Spleen (tissue), 13 donors: ENCODE measurements at regions of chr1 and their contacts with region 1.

Region 1: DNA sequence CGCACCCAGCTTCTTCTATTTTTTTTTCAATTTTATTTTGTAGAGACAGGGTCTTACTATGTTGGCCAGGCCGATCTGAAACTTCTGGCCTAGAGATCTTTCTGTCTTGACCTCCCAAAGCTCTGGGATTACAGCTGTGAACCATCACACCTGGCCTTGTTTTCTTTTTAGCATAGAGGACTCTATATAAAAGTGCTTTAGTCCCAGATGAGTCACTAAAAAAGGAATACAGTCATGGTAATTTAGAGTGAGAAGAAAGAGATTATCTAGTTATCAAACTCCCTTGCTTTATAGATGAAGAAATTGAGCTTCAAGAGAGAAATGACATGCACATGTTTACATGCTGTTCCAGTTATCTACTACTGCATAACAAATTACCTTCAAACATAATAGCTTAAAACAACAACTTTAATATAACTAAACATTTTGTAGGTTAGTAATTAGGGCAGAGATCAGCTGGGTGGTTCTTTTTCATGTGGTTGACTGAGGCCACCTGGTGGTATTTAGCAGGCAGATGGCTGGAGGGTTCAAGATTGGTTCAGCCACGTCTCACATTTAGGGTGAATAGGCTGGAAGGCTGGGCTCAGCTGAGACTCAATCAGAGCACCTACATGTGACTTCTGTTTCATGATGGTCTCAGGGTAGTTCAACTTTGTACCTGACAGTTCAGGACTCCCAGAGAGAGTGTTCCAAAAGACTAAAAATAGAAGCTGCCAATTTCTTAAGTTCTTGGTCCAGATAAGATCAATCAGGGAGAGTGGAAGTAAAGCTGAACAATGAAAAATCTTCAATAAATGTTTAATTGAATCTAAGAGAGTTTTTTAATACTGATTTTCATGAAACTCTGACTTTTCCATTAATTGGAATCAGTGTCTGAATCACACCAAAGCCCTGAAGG is 16.9 kb upstream of the MTF2 start:
- DNase-seq: no peak
- H3K4me3 ChIP-seq: no peak overlapping the region
- H3K27ac ChIP-seq: no peak overlapping the region
- H3K4me1 ChIP-seq: peaks cover 0 to 7% (median 0%) of the 10 kb centered on the region in 6 donors
- H3K27me3 ChIP-seq: no peaks in the 10 kb centered on the region
- CTCF ChIP-seq: peak in 10 of 11 experiments; percentile 26 to 71 (median 60)
- POLR2A ChIP-seq: no peak

Region 2: DNA sequence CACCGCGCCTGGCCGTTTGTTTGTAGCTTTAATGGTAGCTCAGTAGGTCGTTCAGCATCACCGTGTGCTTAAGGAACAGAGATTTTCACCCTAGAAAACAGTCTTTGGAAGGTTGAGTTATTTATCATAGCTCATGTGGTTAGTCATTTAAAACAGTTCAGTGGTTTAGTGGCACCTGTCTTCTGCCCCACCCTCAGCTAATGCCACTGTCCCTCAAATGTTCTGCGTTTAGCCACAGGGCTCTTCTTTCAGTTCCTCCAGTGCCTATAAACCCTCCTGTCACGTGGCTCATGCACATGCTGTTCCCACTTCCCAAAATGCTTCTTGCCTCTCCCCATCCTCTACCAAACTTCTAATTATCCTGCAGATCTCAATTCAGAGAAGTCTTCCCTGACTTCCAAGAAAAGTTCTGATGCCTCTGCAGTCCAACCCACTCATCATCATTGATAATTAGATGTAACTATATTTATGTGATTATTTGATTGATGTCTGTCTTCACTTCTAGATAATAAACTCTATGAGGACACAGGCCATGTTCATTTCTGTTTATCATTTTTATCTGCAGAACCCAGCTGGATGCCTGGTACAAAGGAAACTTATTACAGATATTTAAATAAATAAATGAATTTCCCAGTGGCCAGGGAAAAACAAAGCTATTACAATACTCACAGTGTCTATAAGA is 86.5 kb before region 1 on chr1:
- intact Hi-C with region 1: no loop called
- DNase-seq: no peak
- H3K4me3 ChIP-seq: no peak overlapping the region
- H3K27ac ChIP-seq: peak overlapping the region; percentile 49 to 90 (median 75)
- H3K4me1 ChIP-seq: peaks cover 25 to 92% (median 62%) of the 10 kb centered on the region in 6 donors
- H3K27me3 ChIP-seq: no peaks in the 10 kb centered on the region
- CTCF ChIP-seq: no peak
- POLR2A ChIP-seq: no peak

Region 3: GRCh38 chr1:93021539-93022134 is 40.5 kb before region 1 on chr1:
- intact Hi-C with region 1: loop called (anchors 2 kb)
- DNase-seq: no peak
- H3K4me3 ChIP-seq: no peak overlapping the region
- H3K27ac ChIP-seq: no peak overlapping the region
- H3K4me1 ChIP-seq: peaks cover 0 to 14% (median 6%) of the 10 kb centered on the region in 6 donors
- H3K27me3 ChIP-seq: no peaks in the 10 kb centered on the region
- CTCF ChIP-seq: peak; percentile 56 to 80 (median 78)
- POLR2A ChIP-seq: no peak